ENCODE measurements at regions of chr12 and their contacts with region 1.

Region 1: GRCh38 chr12:106223485-106224354 is 24.1 kb downstream of the CKAP4 start:
- DNase-seq: peak; percentile 83
- H3K4me3 Mint-ChIP-seq: no peak overlapping the region
- H3K27ac Mint-ChIP-seq: no peak overlapping the region
- H3K4me1 Mint-ChIP-seq: peaks cover 16% of the 10 kb centered on the region
- H3K27me3 Mint-ChIP-seq: peaks cover 2% of the 10 kb centered on the region

Region 2: GRCh38 chr12:105420659-105421240 is 803.0 kb before region 1 on chr12:
- CTCF ChIA-PET with region 1: interaction called, 15 read pairs
- POLR2A ChIA-PET with region 1: no interaction called
- intact Hi-C with region 1: loop called (anchors 1 kb)
- DNase-seq: peak; percentile 75
- H3K4me3 Mint-ChIP-seq: no peak overlapping the region
- H3K27ac Mint-ChIP-seq: no peak overlapping the region
- H3K4me1 Mint-ChIP-seq: peaks cover 6% of the 10 kb centered on the region
- H3K27me3 Mint-ChIP-seq: no peaks in the 10 kb centered on the region

Region 3: GRCh38 chr12:105862163-105862821 is 361.4 kb before region 1 on chr12:
- CTCF ChIA-PET with region 1: no interaction called
- POLR2A ChIA-PET with region 1: no interaction called
- intact Hi-C with region 1: no loop called
- DNase-seq: no peak
- H3K4me3 Mint-ChIP-seq: no peak overlapping the region
- H3K27ac Mint-ChIP-seq: no peak overlapping the region
- H3K4me1 Mint-ChIP-seq: no peaks in the 10 kb centered on the region
- H3K27me3 Mint-ChIP-seq: peaks cover 5% of the 10 kb centered on the region

Region 4: GRCh38 chr12:106136263-106136662 is 87.5 kb before region 1 on chr12:
- CTCF ChIA-PET with region 1: interaction called, 8 read pairs
- POLR2A ChIA-PET with region 1: no interaction called
- intact Hi-C with region 1: loop called (anchors 5 kb)
- DNase-seq: peak; percentile 81
- H3K4me3 Mint-ChIP-seq: no peak overlapping the region
- H3K27ac Mint-ChIP-seq: no peak overlapping the region
- H3K4me1 Mint-ChIP-seq: peaks cover 13% of the 10 kb centered on the region
- H3K27me3 Mint-ChIP-seq: peaks cover 61% of the 10 kb centered on the region

Region 5: DNA sequence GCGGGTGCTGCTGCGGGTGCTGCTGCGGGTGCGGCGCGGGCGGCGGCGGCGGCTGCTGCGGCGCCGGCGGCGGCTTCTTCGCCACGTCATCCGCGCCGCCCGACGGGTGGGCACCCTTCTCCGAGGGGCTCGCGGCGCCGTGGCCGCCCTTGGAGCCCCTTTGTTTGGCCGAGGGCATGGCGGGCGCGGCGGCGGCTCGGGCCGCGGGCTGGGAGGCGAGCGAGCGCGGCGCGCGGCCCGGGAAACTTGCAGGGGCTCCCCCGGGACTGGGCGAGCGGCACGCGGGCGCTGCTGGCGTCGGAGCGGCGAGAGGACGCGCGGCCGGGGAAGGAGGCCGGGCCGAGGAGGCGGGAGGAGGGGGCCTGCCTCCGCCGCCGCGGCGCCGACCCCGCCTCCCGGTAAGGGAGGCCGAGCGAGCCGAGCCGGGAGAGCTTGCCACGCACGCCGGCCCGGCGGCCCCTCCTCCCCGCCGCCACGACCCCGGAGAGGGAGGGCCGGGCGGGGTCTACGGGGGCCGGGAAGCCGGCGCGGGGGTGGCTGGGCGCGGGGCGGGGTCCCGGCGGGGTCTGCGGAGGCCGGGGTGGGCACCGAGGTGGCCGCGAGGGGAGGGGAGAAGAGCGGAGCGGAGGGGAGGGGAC is 24.1 kb after region 1 on chr12 and contains the start of gene CKAP4:
- CTCF ChIA-PET with region 1: interaction called, 13 read pairs
- POLR2A ChIA-PET with region 1: interaction called, 3 read pairs
- intact Hi-C with region 1: loop called (anchors 1 kb)
- DNase-seq: peak; percentile 61
- H3K4me3 Mint-ChIP-seq: peak within 1 kb of the TSS; percentile 76
- H3K27ac Mint-ChIP-seq: peak within 1 kb of the TSS; percentile 69
- H3K4me1 Mint-ChIP-seq: peaks cover 24% of the 10 kb centered on the region
- H3K27me3 Mint-ChIP-seq: no peaks in the 10 kb centered on the region
- total RNA-seq, gene CKAP4: 18.5 to 19.0 TPM

Region 6: GRCh38 chr12:106302401-106303201 is 78.9 kb after region 1 on chr12 and contains the start of gene TCP11L2:
- CTCF ChIA-PET with region 1: interaction called, 5 read pairs
- POLR2A ChIA-PET with region 1: no interaction called
- intact Hi-C with region 1: loop called (anchors 5 kb)
- DNase-seq: peak; percentile 91
- H3K4me3 Mint-ChIP-seq: peak within 1 kb of the TSS; percentile 89
- H3K27ac Mint-ChIP-seq: peak within 1 kb of the TSS; percentile 99
- H3K4me1 Mint-ChIP-seq: peaks cover 52% of the 10 kb centered on the region
- H3K27me3 Mint-ChIP-seq: no peaks in the 10 kb centered on the region
- total RNA-seq, gene TCP11L2: 8.8 to 10.3 TPM

Region 7: GRCh38 chr12:106919910-106920544 is 696.3 kb after region 1 on chr12:
- CTCF ChIA-PET with region 1: no interaction called
- POLR2A ChIA-PET with region 1: no interaction called
- intact Hi-C with region 1: loop called (anchors 10 kb)
- DNase-seq: no peak
- H3K4me3 Mint-ChIP-seq: no peak overlapping the region
- H3K27ac Mint-ChIP-seq: no peak overlapping the region
- H3K4me1 Mint-ChIP-seq: peaks cover 9% of the 10 kb centered on the region
- H3K27me3 Mint-ChIP-seq: peaks cover 5% of the 10 kb centered on the region

Measured in activated CD4-positive, alpha-beta memory T cell treated with anti-CD3 and anti-CD28 coated beads for 36 hours (primary cell).